Activated T-helper 1 cell treated with anti-CD3 and anti-CD28 coated beads, Interleukin-12 subunit alpha, Interleukin-12 subunit beta, Interleukin-2, Interleukin-4 antibody, amounts not matched to agents 30 ng/mL and 10 ng/mL and 1 ng/mL, durations not matched to agents 14 hours and 24 hours and 36 hours (primary cell): ENCODE measurements at regions of chr14 and their contacts with region 1.

Region 1: GRCh38 chr14:100239840-100240724 is 1.1 kb downstream of the YY1 start:
- DNase-seq: peak; percentile 83
- H3K4me3 Mint-ChIP-seq: peak overlapping the region; percentile 92
- H3K27ac Mint-ChIP-seq: peak overlapping the region; percentile 90
- H3K4me1 Mint-ChIP-seq: peaks cover 54% of the 10 kb centered on the region
- H3K27me3 Mint-ChIP-seq: no peaks in the 10 kb centered on the region

Region 2: DNA sequence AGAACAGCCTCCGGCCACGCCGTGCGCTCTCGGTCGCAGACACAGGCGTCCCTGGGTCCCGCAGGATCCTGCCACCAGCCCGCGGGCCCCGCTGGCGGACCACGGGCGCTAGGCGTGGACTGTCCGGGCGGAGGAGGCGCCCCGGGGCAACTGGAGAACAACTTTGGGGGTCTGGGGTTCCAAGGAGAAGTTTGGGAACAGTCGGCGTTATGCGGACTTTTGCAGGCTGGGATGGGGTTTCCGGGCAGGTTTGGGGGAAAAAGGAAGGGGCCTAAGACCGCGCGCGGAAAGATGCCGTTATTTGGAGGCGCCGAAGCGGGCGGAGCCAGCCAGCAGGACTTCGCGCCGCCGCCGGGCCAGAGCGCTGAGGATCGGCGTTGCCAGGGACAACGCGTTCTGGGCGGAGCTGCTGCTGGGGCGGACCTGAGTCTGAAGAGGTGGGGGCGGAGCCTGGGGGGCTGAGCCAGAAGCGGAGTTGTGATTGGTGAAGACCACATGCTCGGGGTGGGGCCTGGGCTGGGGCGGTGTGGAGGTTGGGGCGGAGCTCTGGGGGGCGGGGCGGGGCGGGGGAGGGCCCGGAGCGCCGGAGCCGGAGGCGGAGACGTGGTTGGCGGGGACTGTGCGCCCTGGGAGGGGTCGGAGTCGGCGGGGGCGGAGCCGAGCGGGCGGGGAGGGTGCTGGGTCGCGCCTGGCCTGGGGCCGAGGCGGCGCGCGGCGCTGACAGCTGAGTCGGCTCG is 556.3 kb before region 1 on chr14 and contains the start of gene CYP46A1:
- intact Hi-C with region 1: loop called (anchors 5 kb)
- DNase-seq: peak; percentile 99
- H3K4me3 Mint-ChIP-seq: peak within 1 kb of the TSS; percentile 87
- H3K27ac Mint-ChIP-seq: peak within 1 kb of the TSS; percentile 87
- H3K4me1 Mint-ChIP-seq: peaks cover 5% of the 10 kb centered on the region
- H3K27me3 Mint-ChIP-seq: peaks cover 31% of the 10 kb centered on the region
- total RNA-seq, gene CYP46A1: 0.27 TPM in 1 of 2 replicates, not detected in the other

Region 3: GRCh38 chr14:100108042-100108825 is 131.8 kb before region 1 on chr14:
- intact Hi-C with region 1: loop called (anchors 2 kb)
- DNase-seq: peak; percentile 74
- H3K4me3 Mint-ChIP-seq: peak overlapping the region; percentile 47
- H3K27ac Mint-ChIP-seq: peak overlapping the region; percentile 93
- H3K4me1 Mint-ChIP-seq: peaks cover 76% of the 10 kb centered on the region
- H3K27me3 Mint-ChIP-seq: no peaks in the 10 kb centered on the region

Region 4: GRCh38 chr14:100221533-100222223 is 18.4 kb before region 1 on chr14:
- intact Hi-C with region 1: loop called (anchors 1 kb)
- DNase-seq: peak; percentile 67
- H3K4me3 Mint-ChIP-seq: no peak overlapping the region
- H3K27ac Mint-ChIP-seq: no peak overlapping the region
- H3K4me1 Mint-ChIP-seq: peaks cover 6% of the 10 kb centered on the region
- H3K27me3 Mint-ChIP-seq: no peaks in the 10 kb centered on the region